ENCODE measurements at regions of chr6 and their contacts with region 1.

Region 1: DNA sequence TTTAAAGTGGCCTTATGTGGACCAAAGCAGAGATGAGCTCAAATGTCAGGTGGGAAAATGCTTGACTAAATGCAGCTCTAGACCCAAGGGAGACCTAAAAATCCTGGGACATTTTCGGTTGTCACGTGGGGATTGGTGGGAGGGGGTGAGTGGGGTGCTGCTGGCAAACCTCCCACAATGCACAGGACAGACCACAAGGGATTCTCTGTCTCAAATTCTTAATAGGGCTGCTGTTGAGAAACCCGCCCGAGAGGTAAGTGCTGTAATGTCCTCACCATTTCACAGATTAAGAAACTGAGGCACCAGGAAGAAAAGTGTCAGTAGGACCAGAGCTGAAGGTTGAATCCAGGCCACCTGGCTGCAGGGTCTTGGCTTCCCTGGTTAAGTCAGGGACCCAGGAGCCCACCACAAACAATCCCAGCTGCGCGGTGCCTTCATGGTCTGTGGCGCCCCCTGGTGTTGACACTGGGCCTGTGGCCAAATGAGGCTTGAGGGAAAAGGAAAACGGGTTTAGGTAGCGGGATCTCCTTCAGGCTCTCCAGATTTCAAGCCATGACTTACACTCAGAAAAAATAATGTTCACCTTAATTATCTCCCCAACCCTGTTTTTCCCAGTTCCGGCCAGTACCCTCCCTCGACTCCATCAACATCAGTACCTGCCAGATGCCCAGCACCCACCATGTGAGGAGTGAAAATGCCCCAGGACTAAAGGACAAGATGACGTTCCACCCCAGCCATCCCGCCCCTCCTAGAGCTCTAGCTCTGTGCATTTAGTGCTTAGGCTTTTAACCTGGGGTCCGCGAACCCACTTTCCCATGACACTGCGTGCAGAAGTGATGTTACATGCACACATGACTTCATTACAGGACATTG is 7.2 kb downstream of the HLA-G start:
- DNase-seq: peak in 1 of 2 donors; percentile 18
- ATAC-seq: no peak
- H3K4me3 ChIP-seq: no peak overlapping the region
- H3K27ac ChIP-seq: no peak overlapping the region
- H3K4me1 ChIP-seq: no peaks in the 10 kb centered on the region
- H3K27me3 ChIP-seq: peaks cover 11 to 23% (median 20%) of the 10 kb centered on the region in 3 donors
- CTCF ChIP-seq: peak; percentile 56 to 77 (median 65)
- POLR2A ChIP-seq: no peak

Region 2: DNA sequence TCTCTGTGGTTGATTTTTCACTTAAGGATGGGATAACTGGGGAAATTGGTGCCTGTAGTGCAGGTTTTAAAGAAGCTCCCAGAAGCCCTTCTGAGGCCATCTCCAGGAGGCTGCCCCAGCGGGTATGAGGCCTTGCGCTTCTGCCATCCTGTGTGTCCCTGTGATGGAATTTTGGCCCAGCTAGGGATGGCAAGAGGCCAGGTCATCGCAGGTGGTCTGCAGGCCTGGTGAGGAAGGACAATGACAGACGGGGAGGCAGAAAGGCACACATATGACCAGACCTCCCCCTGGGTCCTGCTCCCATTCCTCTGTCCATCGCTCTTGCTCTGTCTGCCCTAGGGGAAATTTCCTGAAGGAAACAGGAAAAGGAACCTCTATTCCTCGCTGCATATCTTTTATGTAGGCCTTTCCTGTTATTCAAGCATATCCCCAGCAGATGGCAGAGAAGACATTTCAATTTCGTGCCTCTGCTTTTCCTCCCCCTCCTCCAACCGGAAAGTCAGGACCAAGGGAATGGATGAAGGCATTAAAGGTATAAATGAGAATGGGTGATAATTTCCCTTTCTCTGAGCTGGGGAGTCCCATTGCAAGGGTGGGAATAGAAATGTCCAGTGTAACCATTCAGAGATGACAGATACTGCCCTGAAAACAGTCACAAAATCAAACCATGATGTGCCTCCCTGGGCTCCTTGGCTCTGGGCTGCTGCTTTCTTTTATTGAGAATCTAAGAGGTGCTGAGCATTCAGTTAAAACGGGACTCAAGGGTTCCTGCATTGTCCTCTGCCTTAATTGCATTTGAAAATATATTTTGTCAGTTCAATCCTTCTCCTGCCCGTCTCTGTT is 129.2 kb before region 1 on chr6:
- in situ Hi-C with region 1: no loop called
- intact Hi-C with region 1: loop called (anchors 2 kb)
- DNase-seq: no peak
- ATAC-seq: no peak
- H3K4me3 ChIP-seq: no peak overlapping the region
- H3K27ac ChIP-seq: no peak overlapping the region
- H3K4me1 ChIP-seq: no peaks in the 10 kb centered on the region
- H3K27me3 ChIP-seq: peaks cover 0 to 9% (median 8%) of the 10 kb centered on the region in 3 donors
- CTCF ChIP-seq: peak in 4 of 5 experiments; percentile 18 to 58 (median 40)
- POLR2A ChIP-seq: no peak

Region 3: GRCh38 chr6:29737707-29738630 is 96.8 kb before region 1 on chr6:
- in situ Hi-C with region 1: no loop called
- intact Hi-C with region 1: loop called (anchors 1 kb)
- DNase-seq: peak; percentile 27 to 48
- ATAC-seq: peak in 1 of 2 donors; percentile 78
- H3K4me3 ChIP-seq: no peak overlapping the region
- H3K27ac ChIP-seq: no peak overlapping the region
- H3K4me1 ChIP-seq: no peaks in the 10 kb centered on the region
- H3K27me3 ChIP-seq: no peaks in the 10 kb centered on the region
- CTCF ChIP-seq: peak; percentile 49 to 68 (median 60)
- POLR2A ChIP-seq: no peak

Region 4: GRCh38 chr6:29813809-29814208 is 21.0 kb before region 1 on chr6:
- in situ Hi-C with region 1: no loop called
- intact Hi-C with region 1: no loop called
- DNase-seq: no peak
- ATAC-seq: no peak
- H3K4me3 ChIP-seq: no peak overlapping the region
- H3K27ac ChIP-seq: no peak overlapping the region
- H3K4me1 ChIP-seq: no peaks in the 10 kb centered on the region
- H3K27me3 ChIP-seq: no peaks in the 10 kb centered on the region
- CTCF ChIP-seq: no peak
- POLR2A ChIP-seq: no peak